Activated CD4-positive, alpha-beta memory T cell treated with anti-CD3 and anti-CD28 coated beads for 36 hours (primary cell): ENCODE measurements at regions of chr14 and their contacts with region 1.

Region 1: GRCh38 chr14:24690492-24690891 is 56.5 kb upstream of the GZMB start:
- DNase-seq: no peak
- H3K4me3 Mint-ChIP-seq: no peak overlapping the region
- H3K27ac Mint-ChIP-seq: no peak overlapping the region
- H3K4me1 Mint-ChIP-seq: peaks cover 5% of the 10 kb centered on the region
- H3K27me3 Mint-ChIP-seq: peaks cover 4% of the 10 kb centered on the region

Region 2: GRCh38 chr14:24673534-24674203 is 16.8 kb before region 1 on chr14:
- CTCF ChIA-PET with region 1: interaction called, 41 read pairs
- POLR2A ChIA-PET with region 1: interaction called, 16 read pairs
- intact Hi-C with region 1: loop called (anchors 1 kb)
- DNase-seq: peak; percentile 83
- H3K4me3 Mint-ChIP-seq: peak overlapping the region; percentile 62
- H3K27ac Mint-ChIP-seq: peak overlapping the region; percentile 94
- H3K4me1 Mint-ChIP-seq: peaks cover 79% of the 10 kb centered on the region
- H3K27me3 Mint-ChIP-seq: no peaks in the 10 kb centered on the region

Region 3: GRCh38 chr14:24678801-24679247 is 11.7 kb before region 1 on chr14:
- CTCF ChIA-PET with region 1: interaction called, 41 read pairs
- POLR2A ChIA-PET with region 1: interaction called, 16 read pairs
- intact Hi-C with region 1: no loop called
- DNase-seq: peak; percentile 81
- H3K4me3 Mint-ChIP-seq: peak overlapping the region; percentile 63
- H3K27ac Mint-ChIP-seq: peak overlapping the region; percentile 72
- H3K4me1 Mint-ChIP-seq: peaks cover 50% of the 10 kb centered on the region
- H3K27me3 Mint-ChIP-seq: no peaks in the 10 kb centered on the region